ENCODE measurements at regions of chr1 and their contacts with region 1.

Region 1: GRCh38 chr1:223052931-223053330 is 90.1 kb downstream of the TLR5 start:
- DNase-seq: no peak
- ATAC-seq: no peak
- H3K4me3 ChIP-seq: no peak overlapping the region
- H3K27ac ChIP-seq: no peak overlapping the region
- H3K4me1 ChIP-seq: no peaks in the 10 kb centered on the region
- H3K27me3 ChIP-seq: peaks cover 16% of the 10 kb centered on the region
- CTCF ChIP-seq: no peak
- POLR2A ChIP-seq: no peak
- RAD21 ChIP-seq: no peak

Region 2: DNA sequence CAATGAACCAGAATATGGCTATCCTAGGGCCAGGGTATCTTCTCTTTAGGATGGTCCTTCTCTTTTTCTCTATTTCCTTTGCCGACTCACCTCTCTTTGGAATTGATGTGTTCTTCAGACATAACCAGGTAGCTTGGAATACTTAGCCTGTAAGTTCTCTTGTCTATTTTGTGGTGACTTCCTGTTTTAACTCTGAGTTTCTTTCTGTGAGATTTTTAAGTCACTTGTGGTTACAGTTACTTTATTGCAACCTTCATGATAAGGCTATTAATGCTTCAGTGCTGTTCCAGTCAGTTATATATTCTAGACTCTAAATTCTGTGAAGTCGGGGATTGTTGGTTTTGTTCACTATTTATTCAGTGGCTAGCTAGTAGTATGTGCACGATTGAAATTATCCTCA is 191.9 kb before region 1 on chr1:
- CTCF ChIA-PET with region 1: no interaction called
- POLR2A ChIA-PET with region 1: no interaction called
- dilution Hi-C with region 1: no loop called
- in situ Hi-C with region 1: no loop called
- intact Hi-C with region 1: no loop called
- DNase-seq: no peak
- ATAC-seq: no peak
- H3K4me3 ChIP-seq: no peak overlapping the region
- H3K27ac ChIP-seq: no peak overlapping the region
- H3K4me1 ChIP-seq: no peaks in the 10 kb centered on the region
- H3K27me3 ChIP-seq: no peaks in the 10 kb centered on the region
- CTCF ChIP-seq: no peak
- POLR2A ChIP-seq: no peak
- RAD21 ChIP-seq: no peak

Region 3: DNA sequence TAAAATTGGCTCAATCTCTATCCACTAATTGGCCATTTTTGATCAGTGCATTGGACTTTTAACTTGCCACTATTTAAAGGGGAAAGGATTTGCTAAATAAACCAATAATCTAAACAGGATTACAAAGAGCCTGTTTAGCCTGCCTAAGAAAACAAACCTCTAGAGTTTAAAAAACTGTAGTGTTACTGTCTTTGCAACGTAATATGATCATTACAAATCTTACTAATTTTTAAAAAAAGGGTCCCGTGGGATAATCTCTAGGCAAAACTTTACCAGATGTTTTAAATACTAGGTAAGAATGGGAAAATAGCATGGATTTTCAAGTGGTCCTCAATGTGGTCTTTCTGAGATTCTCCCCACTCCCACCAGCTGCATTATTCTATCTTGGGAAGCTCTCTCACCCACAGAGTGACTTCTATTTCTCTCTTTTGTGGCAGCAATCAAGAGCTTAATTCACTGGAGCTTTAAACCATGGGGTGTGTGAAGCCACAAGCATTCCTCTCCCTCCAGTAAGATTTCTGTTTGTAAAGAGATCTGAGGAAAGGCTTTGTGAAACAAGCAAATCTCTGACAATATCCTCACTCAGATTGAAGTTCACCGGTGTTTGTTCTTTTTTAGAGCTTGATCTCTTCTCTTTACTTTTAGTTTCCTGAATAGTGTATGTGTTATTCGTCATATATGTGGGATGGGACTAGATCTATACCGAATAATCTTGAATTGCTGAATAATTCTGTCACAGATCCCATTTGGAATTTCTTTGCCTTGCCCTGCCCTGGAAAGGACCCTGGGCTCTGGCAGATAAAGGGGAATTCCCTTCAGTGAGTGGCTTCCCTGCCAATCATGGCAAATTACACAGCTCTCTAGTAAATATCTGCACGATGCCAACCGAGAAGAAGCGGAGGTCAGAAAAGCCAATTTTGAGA is 42.1 kb before region 1 on chr1:
- CTCF ChIA-PET with region 1: no interaction called
- POLR2A ChIA-PET with region 1: no interaction called
- dilution Hi-C with region 1: no loop called
- in situ Hi-C with region 1: no loop called
- intact Hi-C with region 1: loop called (anchors 1 kb)
- DNase-seq: peak; percentile 19
- ATAC-seq: peak; percentile 73
- H3K4me3 ChIP-seq: no peak overlapping the region
- H3K27ac ChIP-seq: no peak overlapping the region
- H3K4me1 ChIP-seq: 0 out of 2 replicates have a peak, but pooled peaks cover 4% of the 10 kb centered on the region
- H3K27me3 ChIP-seq: no peaks in the 10 kb centered on the region; the same call in 1 of the 2 replicates
- CTCF ChIP-seq: no peak
- POLR2A ChIP-seq: no peak
- RAD21 ChIP-seq: no peak

Measured in IMR-90 (cell line).